Cardiac septum (tissue), 1 donor: ENCODE measurements at regions of chr5 and their contacts with region 1.

Region 1: GRCh38 chr5:142783601-142784341 is 13.6 kb downstream of the ARHGAP26 start:
- DNase-seq: no peak

Region 2: GRCh38 chr5:142816531-142817430 is 33.0 kb after region 1 on chr5:
- intact Hi-C with region 1: loop called (anchors 5 kb)
- DNase-seq: peak; percentile 80